Naive thymus-derived CD4-positive, alpha-beta T cell (primary cell): ENCODE measurements at regions of chr4 and their contacts with region 1.

Region 1: DNA sequence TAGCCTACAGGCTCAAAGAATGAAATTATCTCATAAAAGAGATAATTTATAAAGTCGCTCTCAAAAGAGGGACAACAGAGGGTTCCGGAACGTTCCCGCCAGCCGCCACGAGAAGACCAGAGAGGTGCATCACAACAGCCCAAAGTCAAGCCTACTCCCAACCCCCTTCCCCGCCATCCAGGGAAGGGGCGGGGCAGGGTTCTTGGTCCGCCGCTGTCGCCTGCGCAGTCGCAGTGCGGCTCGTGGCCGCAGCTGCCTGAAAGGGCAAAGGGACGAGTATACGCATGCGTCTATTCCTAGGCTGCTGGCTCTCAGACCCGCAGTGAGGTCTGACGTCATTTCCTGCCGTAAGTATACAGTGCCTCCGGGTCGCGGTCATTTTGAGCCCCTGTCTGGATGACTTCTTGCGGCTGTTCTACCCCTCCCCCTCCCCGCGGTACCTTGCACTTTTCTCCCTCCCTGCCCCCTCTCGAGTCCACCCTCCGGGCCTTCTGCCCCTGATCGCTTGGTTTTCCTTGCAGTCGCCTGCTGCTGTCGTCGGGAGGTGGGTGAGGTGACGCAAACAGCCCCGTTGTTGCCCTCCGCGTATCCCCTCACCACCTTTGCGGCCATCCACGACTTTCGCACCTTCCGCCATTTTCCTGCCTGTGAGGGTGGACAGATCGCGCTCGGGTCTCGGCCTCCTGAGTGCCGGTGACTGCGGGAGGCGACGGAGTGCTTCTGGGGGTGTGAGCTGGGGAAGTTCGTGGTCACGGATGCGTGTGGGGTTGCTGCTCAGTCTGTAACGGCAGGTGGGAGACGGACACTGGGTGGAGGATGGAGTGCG is at the start of gene OCIAD1:
- DNase-seq: peak; percentile 80 to 98 (median 93)
- ATAC-seq: peak; percentile 98
- H3K4me3 ChIP-seq: peak within 1 kb of the TSS; percentile 98
- H3K4me3 Mint-ChIP-seq: peak within 1 kb of the TSS; percentile 96 to 100 (median 100)
- H3K27ac ChIP-seq: peak within 1 kb of the TSS; percentile 91
- H3K27ac Mint-ChIP-seq: peak within 1 kb of the TSS; percentile 98 to 100 (median 100)
- H3K4me1 ChIP-seq: peaks cover 10 to 12% of the 10 kb centered on the region in 2 donors
- H3K4me1 Mint-ChIP-seq: peaks cover 10 to 44% (median 36%) of the 10 kb centered on the region in 7 donors
- H3K27me3 ChIP-seq: no peaks in the 10 kb centered on the region
- H3K27me3 Mint-ChIP-seq: peaks cover 0 to 4% (median 4%) of the 10 kb centered on the region in 5 donors
- total RNA-seq, gene OCIAD1: 85.6 to 128 (median 102) TPM

Region 2: DNA sequence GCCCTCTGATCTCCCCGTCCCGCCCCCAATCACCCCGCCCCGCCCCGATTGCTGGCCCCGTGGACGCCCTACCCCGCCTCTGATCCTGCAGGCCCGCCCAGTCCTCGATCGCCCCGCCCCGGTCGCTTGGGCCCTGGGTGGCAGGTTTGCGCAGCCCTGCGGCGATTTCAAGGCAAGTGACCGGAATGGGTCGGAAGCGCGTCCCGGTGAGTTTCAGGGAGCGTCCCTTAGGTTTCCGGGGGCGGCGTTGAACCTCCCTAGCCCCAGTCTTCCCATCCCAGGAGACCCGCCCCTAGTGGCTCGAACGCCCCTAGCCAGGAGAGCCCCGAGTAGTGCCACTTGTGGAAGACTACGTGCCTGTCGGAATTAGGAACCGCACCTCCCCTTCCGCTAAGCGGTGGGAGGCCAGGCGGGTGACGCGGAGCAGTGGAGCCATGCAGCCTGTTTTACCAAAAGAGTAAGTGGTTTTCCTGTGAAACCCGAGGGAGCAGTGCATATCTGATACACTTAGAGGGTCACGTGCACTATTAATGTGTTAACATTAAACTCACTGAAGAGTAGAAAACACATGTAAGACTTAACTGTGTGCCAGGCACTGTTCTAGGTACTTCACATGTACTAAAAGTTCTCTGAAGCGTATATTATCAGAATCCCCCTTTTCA is 560.9 kb before region 1 on chr4:
- CTCF ChIA-PET with region 1: no interaction called
- POLR2A ChIA-PET with region 1: no interaction called
- intact Hi-C with region 1: loop called (anchors 1 to 2 kb)
- DNase-seq: peak; percentile 48 to 88 (median 69)
- ATAC-seq: peak; percentile 95
- H3K4me3 ChIP-seq: peak overlapping the region; percentile 88
- H3K4me3 Mint-ChIP-seq: peak overlapping the region; percentile 95 to 98 (median 97)
- H3K27ac ChIP-seq: peak overlapping the region; percentile 73
- H3K27ac Mint-ChIP-seq: peak overlapping the region; percentile 20 to 94 (median 86)
- H3K4me1 ChIP-seq: peaks cover 0 to 6% of the 10 kb centered on the region in 2 donors
- H3K4me1 Mint-ChIP-seq: peaks cover 6 to 28% (median 22%) of the 10 kb centered on the region in 7 donors
- H3K27me3 ChIP-seq: no peaks in the 10 kb centered on the region
- H3K27me3 Mint-ChIP-seq: no peaks in the 10 kb centered on the region

Region 3: DNA sequence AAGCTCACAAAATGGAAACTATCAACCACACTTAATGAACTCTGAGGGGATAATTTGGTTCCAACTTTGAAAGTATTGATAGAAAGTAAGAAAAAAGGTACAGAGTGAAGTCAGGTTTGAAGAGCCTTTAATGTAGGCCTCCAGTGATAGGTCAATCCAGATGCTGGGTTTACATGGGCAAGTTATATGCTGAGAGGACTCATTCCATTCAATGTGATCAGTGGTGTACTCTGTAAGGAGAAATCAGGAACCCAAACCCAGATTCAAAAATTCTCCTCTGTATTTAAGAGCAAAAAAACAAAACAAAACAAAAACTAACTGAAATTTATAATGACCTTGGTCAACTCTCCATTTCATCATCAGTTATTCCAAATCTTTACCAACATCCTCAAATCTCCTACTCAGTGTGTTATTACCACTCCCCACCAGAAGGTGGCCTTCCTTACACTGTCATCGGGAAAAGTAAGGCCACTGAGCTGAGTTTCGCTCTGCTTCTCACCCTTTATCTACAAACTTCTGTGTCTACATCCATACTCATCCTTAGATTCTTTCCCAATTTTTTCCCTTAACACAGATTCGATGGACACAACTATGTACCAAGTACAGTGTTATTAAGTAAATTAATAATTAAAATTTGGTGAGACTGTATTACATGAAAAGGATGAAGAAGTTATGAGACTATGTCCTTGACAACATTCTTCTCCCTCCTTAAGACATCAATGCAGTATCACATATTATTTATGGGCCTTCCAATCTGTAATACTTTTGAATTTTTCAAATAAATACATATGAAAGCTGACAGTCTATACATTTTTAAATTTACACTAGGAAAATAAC is 252.6 kb before region 1 on chr4:
- CTCF ChIA-PET with region 1: no interaction called
- POLR2A ChIA-PET with region 1: no interaction called
- intact Hi-C with region 1: loop called (anchors 1 to 10 kb)
- DNase-seq: peak in 8 of 9 donors; percentile 29 to 66 (median 50)
- ATAC-seq: peak; percentile 95
- H3K4me3 ChIP-seq: no peak overlapping the region
- H3K4me3 Mint-ChIP-seq: no peak overlapping the region
- H3K27ac ChIP-seq: no peak overlapping the region
- H3K27ac Mint-ChIP-seq: peak overlapping the region in 6 of 9 donors; percentile 28 to 79 (median 52)
- H3K4me1 ChIP-seq: no peaks in the 10 kb centered on the region
- H3K4me1 Mint-ChIP-seq: peaks cover 0 to 7% (median 0%) of the 10 kb centered on the region in 7 donors
- H3K27me3 ChIP-seq: no peaks in the 10 kb centered on the region
- H3K27me3 Mint-ChIP-seq: no peaks in the 10 kb centered on the region

Region 4: DNA sequence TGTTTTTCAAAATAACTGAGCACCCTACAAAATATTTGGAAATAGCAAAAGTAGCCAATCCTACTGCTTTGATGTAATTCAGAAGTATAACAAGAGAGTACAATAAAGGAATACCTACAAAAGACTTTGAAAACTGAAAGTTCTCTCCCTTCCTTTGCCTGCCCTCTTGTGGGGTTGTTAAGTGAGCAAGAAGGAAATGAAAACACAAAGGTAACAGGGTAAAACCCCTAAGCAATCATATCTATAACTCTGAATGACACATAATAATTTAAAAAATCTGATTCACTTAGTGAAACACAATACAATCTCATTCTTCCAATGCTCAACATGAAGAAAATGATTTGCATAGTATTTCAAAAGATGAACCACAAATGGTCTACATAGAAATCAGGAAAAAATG is 149.1 kb before region 1 on chr4:
- CTCF ChIA-PET with region 1: no interaction called
- POLR2A ChIA-PET with region 1: no interaction called
- intact Hi-C with region 1: loop called in 1 of 2 experiments (anchors 5 kb)
- DNase-seq: peak in 6 of 9 donors; percentile 4 to 43 (median 25)
- ATAC-seq: peak; percentile 70
- H3K4me3 ChIP-seq: no peak overlapping the region
- H3K4me3 Mint-ChIP-seq: peak overlapping the region in 1 of 10 donors; percentile 26
- H3K27ac ChIP-seq: no peak overlapping the region
- H3K27ac Mint-ChIP-seq: peak overlapping the region in 7 of 9 donors; percentile 35 to 86 (median 69)
- H3K4me1 ChIP-seq: peaks cover 4 to 9% of the 10 kb centered on the region in 2 donors
- H3K4me1 Mint-ChIP-seq: peaks cover 22 to 52% (median 45%) of the 10 kb centered on the region in 7 donors
- H3K27me3 ChIP-seq: no peaks in the 10 kb centered on the region
- H3K27me3 Mint-ChIP-seq: no peaks in the 10 kb centered on the region

Region 5: GRCh38 chr4:48844843-48845242 is 13.9 kb after region 1 on chr4:
- CTCF ChIA-PET with region 1: interaction called, 4 read pairs
- POLR2A ChIA-PET with region 1: no interaction called
- intact Hi-C with region 1: loop called in 1 of 2 experiments (anchors 1 kb)
- DNase-seq: no peak
- ATAC-seq: no peak
- H3K4me3 ChIP-seq: no peak overlapping the region
- H3K4me3 Mint-ChIP-seq: no peak overlapping the region
- H3K27ac ChIP-seq: no peak overlapping the region
- H3K27ac Mint-ChIP-seq: peak overlapping the region in 3 of 9 donors; percentile 14 to 56 (median 31)
- H3K4me1 ChIP-seq: no peaks in the 10 kb centered on the region
- H3K4me1 Mint-ChIP-seq: peaks cover 8 to 36% (median 22%) of the 10 kb centered on the region in 7 donors
- H3K27me3 ChIP-seq: no peaks in the 10 kb centered on the region
- H3K27me3 Mint-ChIP-seq: no peaks in the 10 kb centered on the region